ENCODE measurements at regions of chr11 and their contacts with region 1.

Region 1: DNA sequence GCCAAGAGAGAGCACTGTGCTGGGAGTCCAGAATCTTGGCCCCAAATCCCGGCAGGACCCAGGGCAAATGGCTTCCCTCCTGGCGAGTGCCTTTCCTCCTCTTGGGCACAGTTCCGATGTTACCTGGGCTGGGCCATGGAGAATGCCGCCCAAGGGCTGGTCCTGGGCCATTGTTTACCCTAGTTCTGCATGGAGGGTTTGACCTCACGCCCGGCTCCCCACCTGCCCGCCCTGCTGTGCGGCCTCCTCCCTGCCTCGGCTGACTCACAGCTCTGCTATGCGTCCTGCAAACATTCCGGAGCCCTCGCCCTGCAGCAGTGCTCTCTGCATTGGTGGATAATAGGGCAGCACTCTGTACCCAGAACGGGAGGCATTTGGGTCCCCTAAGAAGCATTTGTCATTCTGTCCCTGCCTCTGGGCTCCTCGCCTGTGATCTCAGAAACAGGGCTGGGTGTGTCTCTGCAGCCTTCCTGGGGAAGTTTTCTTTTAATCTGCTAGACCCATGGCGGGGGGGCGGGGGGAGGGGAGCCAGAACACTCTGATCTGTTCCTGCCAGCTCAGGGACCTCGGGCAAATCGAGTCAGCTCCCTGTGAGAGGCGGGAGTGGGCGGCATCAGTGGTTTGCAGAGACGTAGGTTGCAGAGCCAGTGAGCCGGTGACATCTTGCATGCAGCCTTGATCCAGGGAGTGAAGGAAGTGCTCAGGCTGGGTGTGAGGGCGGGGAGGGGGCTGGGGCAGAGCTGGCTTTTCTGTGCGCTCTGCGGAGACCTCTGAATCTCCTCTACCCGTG is 32.9 kb upstream of the SMIM38 start:
- DNase-seq: peak; percentile 84
- H3K4me3 Mint-ChIP-seq: peak overlapping the region; percentile 74
- H3K27ac Mint-ChIP-seq: peak overlapping the region; percentile 86
- H3K4me1 Mint-ChIP-seq: peaks cover 27% of the 10 kb centered on the region
- H3K27me3 Mint-ChIP-seq: no peaks in the 10 kb centered on the region

Region 2: GRCh38 chr11:69166218-69167115 is 43.6 kb after region 1 on chr11:
- intact Hi-C with region 1: loop called (anchors 1 kb)
- DNase-seq: peak; percentile 78
- H3K4me3 Mint-ChIP-seq: peak overlapping the region; percentile 74
- H3K27ac Mint-ChIP-seq: peak overlapping the region; percentile 87
- H3K4me1 Mint-ChIP-seq: peaks cover 18% of the 10 kb centered on the region
- H3K27me3 Mint-ChIP-seq: peaks cover 6% of the 10 kb centered on the region

Region 3: GRCh38 chr11:69337211-69337721 is 214.4 kb after region 1 on chr11:
- intact Hi-C with region 1: loop called (anchors 10 kb)
- DNase-seq: peak; percentile 79
- H3K4me3 Mint-ChIP-seq: peak overlapping the region; percentile 61
- H3K27ac Mint-ChIP-seq: peak overlapping the region; percentile 96
- H3K4me1 Mint-ChIP-seq: peaks cover 43% of the 10 kb centered on the region
- H3K27me3 Mint-ChIP-seq: peaks cover 4% of the 10 kb centered on the region

Region 4: GRCh38 chr11:69443138-69443967 is 320.5 kb after region 1 on chr11:
- intact Hi-C with region 1: loop called (anchors 5 kb)
- DNase-seq: peak; percentile 92
- H3K4me3 Mint-ChIP-seq: peak overlapping the region; percentile 72
- H3K27ac Mint-ChIP-seq: peak overlapping the region; percentile 60
- H3K4me1 Mint-ChIP-seq: peaks cover 11% of the 10 kb centered on the region
- H3K27me3 Mint-ChIP-seq: peaks cover 13% of the 10 kb centered on the region

Region 5: DNA sequence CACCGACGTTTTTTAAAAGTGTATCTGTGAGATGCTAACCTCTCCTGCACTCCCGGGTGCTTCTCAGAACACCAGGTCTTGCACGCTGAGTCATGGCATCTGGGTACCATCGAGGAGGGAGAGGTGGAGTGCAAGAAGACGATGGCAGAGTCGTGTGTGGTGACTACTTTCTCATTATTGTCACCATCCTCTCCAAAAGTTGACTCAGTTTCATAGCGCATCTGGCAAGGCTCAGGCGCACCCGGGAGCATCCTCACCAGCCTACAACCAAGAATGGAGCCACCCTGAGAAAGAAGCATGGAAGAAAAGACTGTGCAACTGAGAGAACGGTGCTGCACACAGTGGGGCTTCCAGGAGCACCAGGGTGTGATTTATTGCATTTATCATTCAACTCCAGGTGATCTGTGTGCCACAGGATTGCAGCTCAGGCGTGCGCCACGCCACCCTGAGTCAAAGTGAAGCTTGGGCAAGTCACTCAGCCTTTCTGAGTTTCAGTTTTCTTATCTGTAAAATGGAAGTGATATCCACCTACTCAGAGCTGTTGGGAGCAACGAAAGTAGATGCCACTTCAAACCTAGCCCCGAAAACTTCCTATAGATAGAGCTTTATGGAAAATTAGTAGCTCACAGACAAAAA is 424.0 kb after region 1 on chr11:
- intact Hi-C with region 1: loop called (anchors 5 kb)
- DNase-seq: peak; percentile 66
- H3K4me3 Mint-ChIP-seq: peak overlapping the region; percentile 29
- H3K27ac Mint-ChIP-seq: peak overlapping the region; percentile 41
- H3K4me1 Mint-ChIP-seq: peaks cover 10% of the 10 kb centered on the region
- H3K27me3 Mint-ChIP-seq: peaks cover 23% of the 10 kb centered on the region

Measured in activated CD4-positive, alpha-beta T cell treated with anti-CD3 and anti-CD28 coated beads, Interleukin-2, amount 10 ng/mL, durations not matched to agents 24 days and 14 days (primary cell).